ENCODE measurements at regions of chr2 and their contacts with region 1.

Region 1: GRCh38 chr2:177212106-177212890 is at the start of gene HNRNPA3:
- DNase-seq: peak; percentile 100
- H3K4me3 Mint-ChIP-seq: peak within 1 kb of the TSS; percentile 96
- H3K27ac Mint-ChIP-seq: peak within 1 kb of the TSS; percentile 100
- H3K4me1 Mint-ChIP-seq: peaks cover 33% of the 10 kb centered on the region
- H3K27me3 Mint-ChIP-seq: no peaks in the 10 kb centered on the region
- total RNA-seq, gene HNRNPA3: 322 and 323 TPM in 2 replicates

Region 2: GRCh38 chr2:177056481-177056929 is 155.8 kb before region 1 on chr2:
- intact Hi-C with region 1: no loop called
- DNase-seq: no peak
- H3K4me3 Mint-ChIP-seq: no peak overlapping the region
- H3K27ac Mint-ChIP-seq: no peak overlapping the region
- H3K4me1 Mint-ChIP-seq: peaks cover 9% of the 10 kb centered on the region
- H3K27me3 Mint-ChIP-seq: peaks cover 7% of the 10 kb centered on the region

Region 3: DNA sequence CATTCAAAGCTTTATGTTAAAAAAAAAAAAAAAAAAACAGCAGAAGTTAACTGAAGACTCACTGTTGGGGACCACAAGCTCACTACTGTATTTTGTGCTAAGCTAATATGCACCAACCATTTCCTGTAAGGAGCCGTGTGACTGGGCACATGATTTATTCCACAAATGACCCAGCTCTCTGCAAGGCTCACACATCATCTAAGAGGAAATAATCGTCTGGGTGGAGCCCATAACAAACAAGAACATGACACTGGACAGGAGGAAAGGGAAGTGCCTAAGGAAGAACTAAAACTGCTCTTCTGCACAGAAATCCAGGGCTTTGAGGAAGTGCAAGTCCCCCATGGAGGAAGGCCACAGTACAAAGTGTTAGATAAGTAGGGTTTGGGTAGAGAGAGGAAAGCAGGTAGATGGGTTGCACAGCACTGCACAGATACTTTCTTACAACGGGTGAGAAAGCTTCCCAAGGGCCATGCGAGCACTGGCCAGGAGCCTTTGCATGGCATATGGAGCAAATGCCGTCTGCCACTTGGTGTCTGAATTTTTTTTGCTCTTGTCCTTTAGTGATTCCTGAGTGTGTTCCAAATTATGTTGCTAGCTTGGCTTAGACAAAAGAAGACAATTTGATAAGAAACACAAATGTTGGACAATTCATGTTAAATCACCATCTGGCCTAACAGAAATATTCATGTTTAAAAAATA is 27.8 kb after region 1 on chr2:
- intact Hi-C with region 1: loop called (anchors 2 kb)
- DNase-seq: peak; percentile 18
- H3K4me3 Mint-ChIP-seq: peak overlapping the region; percentile 40
- H3K27ac Mint-ChIP-seq: peak overlapping the region; percentile 84
- H3K4me1 Mint-ChIP-seq: peaks cover 66% of the 10 kb centered on the region
- H3K27me3 Mint-ChIP-seq: no peaks in the 10 kb centered on the region

Region 4: DNA sequence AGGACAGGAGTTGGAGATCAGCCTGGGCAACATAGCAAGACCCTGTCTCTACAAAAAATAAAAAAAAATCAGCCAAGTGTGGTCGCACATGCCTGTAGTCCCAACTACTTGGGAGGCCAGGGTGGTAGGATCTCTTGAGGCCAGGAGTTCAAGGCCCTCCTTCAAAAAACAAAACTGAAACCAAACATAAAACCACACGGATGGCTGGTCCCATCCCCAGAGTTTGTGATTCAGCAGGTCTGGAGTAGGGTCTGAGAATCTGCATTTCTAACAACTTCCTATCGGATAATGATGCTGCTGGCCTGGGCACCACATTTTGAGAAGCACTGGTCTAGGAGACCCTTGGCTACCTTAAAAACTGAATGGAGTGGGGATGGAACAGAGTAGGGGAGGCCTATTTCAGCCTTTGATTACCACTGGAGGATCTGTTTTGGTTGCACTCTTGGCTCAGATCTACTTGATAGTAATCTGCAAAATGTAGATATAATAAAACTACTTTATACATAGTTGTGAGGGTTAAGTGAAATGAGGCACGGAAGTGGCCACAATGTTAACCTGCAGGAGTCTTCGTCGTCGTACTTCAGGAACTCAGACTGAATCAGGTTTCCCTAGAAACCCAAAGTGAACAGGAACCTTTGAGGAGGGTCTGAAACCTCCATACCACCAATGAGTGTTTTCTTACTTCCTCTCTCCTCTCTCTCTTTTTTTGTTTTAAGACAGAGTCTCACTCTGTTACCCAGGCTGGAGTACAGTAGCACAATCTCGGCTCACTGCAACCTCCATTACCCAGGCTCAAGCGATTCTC is 77.7 kb after region 1 on chr2:
- intact Hi-C with region 1: loop called (anchors 2 kb)
- DNase-seq: peak; percentile 37
- H3K4me3 Mint-ChIP-seq: peak overlapping the region; percentile 61
- H3K27ac Mint-ChIP-seq: peak overlapping the region; percentile 79
- H3K4me1 Mint-ChIP-seq: peaks cover 46% of the 10 kb centered on the region
- H3K27me3 Mint-ChIP-seq: no peaks in the 10 kb centered on the region

Region 5: DNA sequence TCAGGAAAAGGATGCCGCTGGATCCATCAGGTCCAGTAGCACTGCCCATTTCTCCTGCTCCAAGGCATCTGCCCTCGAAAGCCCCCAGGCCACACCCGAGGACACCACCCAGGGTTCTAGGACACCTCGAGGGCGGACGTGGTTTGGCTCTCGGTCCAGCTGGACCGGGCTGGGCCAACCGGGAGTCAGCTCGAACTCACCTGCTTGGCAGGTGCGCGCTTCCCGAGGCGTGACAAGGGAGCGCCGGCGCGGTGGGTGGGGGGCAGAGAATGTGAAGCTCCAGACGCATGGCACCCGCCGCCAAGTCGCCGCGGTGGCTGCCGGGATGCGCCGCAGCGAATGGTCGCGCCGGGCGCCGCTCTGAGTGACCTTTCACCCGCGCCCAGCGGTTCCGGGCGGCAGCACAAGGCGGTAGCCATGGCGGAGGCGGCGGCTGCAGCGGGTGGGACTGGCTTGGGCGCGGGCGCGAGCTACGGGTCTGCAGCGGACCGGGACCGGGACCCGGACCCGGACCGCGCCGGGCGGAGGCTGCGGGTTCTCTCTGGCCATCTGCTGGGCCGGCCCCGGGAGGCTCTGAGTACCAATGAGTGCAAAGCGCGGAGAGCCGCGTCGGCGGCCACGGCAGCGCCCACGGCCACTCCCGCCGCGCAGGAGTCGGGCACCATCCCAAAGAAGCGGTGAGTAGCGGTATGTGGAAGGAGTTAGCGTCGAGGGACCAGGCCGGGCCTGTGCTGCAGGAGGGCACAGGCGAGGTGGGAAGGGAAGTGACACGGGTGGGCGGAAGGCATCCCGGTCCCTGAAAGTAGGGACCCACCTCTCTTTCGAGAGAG is 180.3 kb after region 1 on chr2 and contains the start of gene AGPS:
- intact Hi-C with region 1: loop called (anchors 10 kb)
- DNase-seq: peak; percentile 79
- H3K4me3 Mint-ChIP-seq: peak within 1 kb of the TSS; percentile 96
- H3K27ac Mint-ChIP-seq: peak within 1 kb of the TSS; percentile 94
- H3K4me1 Mint-ChIP-seq: peaks cover 63% of the 10 kb centered on the region
- H3K27me3 Mint-ChIP-seq: no peaks in the 10 kb centered on the region
- total RNA-seq, gene AGPS: 70.4 and 74.4 TPM in 2 replicates

Region 6: DNA sequence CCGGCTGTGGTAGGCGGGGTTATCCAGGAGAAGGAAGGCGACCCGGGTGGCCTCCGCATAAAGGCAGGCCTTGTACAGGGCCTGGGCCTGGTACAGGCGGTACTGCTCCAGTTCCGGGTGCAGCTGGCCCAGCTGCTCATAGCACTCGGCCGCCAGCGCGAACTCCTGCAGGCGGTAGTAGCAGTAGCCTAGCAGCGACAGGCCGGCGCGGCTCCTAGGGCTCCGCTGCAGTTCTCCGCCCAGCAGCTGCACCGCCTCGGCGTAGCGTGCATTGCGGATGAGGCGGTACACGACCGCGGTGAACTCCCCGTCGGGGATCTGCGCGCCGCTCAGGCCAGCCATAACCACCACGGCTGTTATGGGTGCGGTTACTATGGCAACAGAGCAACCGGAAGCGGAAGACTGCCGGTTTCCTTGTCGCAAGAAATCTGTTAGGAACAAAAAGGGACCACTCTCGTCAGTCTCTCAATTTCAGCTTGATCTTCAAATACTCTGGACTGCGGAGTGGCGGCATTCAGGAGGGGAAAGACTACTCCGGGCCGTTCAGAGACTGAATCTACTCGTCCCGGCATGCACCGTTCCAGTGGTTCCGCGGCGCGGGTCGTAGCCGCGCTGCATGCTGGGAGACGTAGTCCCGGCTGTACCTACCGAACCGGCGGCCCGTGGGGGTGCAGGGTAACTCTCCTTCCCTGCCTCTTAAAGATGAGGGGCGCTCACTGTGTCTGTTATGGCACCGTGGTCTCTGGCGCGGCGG is 340.3 kb after region 1 on chr2:
- intact Hi-C with region 1: loop called (anchors 1 kb)
- DNase-seq: peak; percentile 89
- H3K4me3 Mint-ChIP-seq: peak overlapping the region; percentile 91
- H3K27ac Mint-ChIP-seq: peak overlapping the region; percentile 97
- H3K4me1 Mint-ChIP-seq: peaks cover 12% of the 10 kb centered on the region
- H3K27me3 Mint-ChIP-seq: peaks cover 1% of the 10 kb centered on the region